Panc1 (cell line): ENCODE measurements at regions of chrX and their contacts with region 1.

Region 1: DNA sequence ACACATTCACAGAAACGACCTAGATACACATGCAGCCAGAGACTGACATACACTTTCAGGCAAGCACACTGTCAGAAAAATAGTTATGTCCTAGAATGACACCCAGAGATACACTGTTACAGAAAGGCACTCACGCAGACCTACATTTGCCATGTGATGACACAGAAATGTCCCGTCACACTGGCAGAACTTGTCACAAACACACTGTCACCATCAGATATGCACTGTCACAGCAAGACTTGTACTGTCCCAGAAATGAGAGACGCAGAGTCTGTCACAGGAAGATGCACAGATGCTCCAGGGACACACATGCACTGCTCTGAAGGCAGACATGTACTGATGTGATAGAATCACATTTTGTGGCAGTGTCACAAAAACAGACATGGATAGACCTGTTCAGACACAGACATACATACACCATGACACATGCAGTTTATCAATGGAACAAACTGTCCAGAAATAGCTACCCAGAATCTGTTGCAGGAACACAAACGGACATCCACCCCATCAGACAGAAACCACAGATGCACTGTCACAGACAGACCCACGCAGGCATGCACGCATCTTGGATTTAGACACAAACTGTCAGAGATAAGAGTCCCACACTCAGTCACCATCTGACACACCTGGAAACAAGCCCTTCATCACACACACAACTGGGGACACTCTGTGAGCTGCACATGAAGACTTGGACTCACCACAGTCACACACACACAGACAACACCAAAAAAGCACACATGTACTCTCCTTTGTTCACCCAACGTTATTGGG is 1.3 kb upstream of the PIM2 start:
- DNase-seq: no peak
- ATAC-seq: no peak
- H3K4me3 ChIP-seq: no peak overlapping the region; a peak in 1 of 4 replicates
- H3K27ac ChIP-seq: peak overlapping the region; percentile 72
- H3K4me1 ChIP-seq: peaks cover 8% of the 10 kb centered on the region
- H3K27me3 ChIP-seq: no peaks in the 10 kb centered on the region
- CTCF ChIP-seq: no peak

Region 2: DNA sequence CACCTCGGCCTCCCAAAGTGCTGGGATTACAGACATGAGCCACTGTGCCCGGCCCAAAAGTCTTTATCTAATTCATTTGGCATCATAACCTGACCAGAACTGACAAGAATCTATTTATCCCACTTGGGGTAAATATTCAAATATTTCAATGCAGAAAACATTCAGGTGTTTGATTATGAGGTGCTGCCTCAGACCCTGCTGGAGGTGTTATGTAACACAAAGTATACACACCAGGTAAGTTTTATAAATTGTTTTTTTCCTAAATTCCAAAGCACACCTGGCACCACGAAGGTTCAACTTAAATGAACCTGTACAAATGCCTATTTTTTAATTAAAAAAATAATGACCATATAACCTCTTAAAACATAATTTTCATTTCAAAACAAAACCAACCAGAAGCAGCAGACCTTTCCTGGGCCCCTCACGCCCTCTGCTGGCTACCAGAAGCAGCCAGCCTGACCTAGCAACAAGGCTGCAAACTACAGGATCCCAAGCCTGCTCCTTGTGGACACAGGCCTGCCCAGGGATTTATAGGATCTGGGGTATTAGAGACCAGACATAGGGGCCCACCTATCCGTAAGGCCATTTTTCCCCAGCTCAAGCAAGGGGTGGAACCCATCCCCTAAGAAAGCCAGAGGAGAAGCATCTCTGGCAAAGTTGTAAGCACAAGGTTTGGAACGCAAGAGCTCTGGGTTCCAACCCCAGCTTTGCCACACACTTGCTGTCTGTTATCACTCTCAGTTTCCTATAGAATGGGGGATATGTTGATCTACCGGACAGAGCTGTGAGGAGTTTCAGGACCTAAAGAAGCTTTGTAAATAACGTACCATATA is 25.6 kb after region 1 on chrX:
- CTCF ChIA-PET with region 1: interaction called, 10 read pairs
- POLR2A ChIA-PET with region 1: interaction called, 20 read pairs
- in situ Hi-C with region 1: no loop called
- intact Hi-C with region 1: no loop called
- DNase-seq: no peak
- ATAC-seq: peak; percentile 96
- H3K4me3 ChIP-seq: no peak overlapping the region
- H3K27ac ChIP-seq: no peak overlapping the region
- H3K4me1 ChIP-seq: no peaks in the 10 kb centered on the region
- H3K27me3 ChIP-seq: no peaks in the 10 kb centered on the region
- CTCF ChIP-seq: peak; percentile 90

Region 3: GRCh38 chrX:49137492-49137891 is 217.4 kb after region 1 on chrX:
- CTCF ChIA-PET with region 1: no interaction called
- POLR2A ChIA-PET with region 1: no interaction called
- in situ Hi-C with region 1: no loop called
- intact Hi-C with region 1: no loop called
- DNase-seq: no peak
- ATAC-seq: no peak
- H3K4me3 ChIP-seq: no peak overlapping the region
- H3K27ac ChIP-seq: no peak overlapping the region
- H3K4me1 ChIP-seq: no peaks in the 10 kb centered on the region
- H3K27me3 ChIP-seq: no peaks in the 10 kb centered on the region
- CTCF ChIP-seq: no peak